ENCODE measurements at regions of chr12 and their contacts with region 1.

Region 1: DNA sequence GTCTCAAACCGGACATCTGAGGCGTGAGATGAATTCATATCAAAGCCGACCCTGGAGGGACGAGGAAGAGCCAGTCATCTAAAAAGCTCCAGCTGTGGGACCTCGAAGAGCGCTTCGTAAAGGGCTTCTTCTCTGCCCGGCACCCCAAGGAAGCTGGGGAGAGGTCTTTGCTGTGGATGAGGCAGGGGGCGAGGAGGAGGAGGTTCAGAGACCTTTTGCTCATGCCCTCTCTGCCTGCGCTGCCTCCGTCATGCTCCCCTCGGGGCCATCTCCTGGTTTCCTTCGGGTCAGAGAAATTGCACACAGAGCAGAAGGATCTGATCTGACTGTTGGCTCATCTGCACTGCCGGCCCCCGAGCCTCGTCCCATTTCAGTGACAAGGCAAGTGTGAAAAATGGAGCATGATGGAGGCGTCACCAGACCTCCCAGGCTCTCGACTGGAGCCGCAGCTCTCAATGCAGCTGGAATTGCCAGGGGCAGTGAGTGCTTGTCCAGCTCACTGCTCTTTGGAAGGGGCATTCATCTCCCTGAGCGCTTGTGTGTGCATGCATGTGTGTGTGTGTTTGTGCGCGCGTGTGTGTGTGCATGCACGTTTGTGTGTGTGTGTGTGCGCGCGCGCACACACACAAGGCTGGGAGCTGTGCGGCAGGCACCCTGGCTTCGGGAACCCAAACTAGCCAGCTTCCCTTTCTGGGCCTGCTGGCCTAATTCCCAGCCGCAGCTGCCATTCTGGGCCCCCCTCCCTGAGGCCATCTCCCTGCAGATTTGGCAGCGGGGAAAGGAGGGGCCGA is 9.2 kb downstream of the CABP1 start:
- DNase-seq: no peak
- H3K4me3 ChIP-seq: peak overlapping the region; percentile 48 to 65
- H3K27ac ChIP-seq: peak overlapping the region; percentile 52 to 64
- H3K4me1 ChIP-seq: peaks cover 12 to 33% of the 10 kb centered on the region in 2 donors
- H3K27me3 ChIP-seq: no peaks in the 10 kb centered on the region
- CTCF ChIP-seq: no peak

Region 2: GRCh38 chr12:120686690-120687577 is 37.3 kb after region 1 on chr12 and contains the start of gene MLEC:
- intact Hi-C with region 1: loop called (anchors 1 kb)
- DNase-seq: peak; percentile 92 to 99
- H3K4me3 ChIP-seq: peak within 1 kb of the TSS; percentile 75 to 99
- H3K27ac ChIP-seq: peak within 1 kb of the TSS; percentile 87 to 89
- H3K4me1 ChIP-seq: peaks cover 7 to 28% of the 10 kb centered on the region in 2 donors
- H3K27me3 ChIP-seq: no peaks in the 10 kb centered on the region
- CTCF ChIP-seq: peak in 2 of 3 experiments; percentile 1 to 21
- total RNA-seq, gene MLEC: 47.5 TPM

Region 3: DNA sequence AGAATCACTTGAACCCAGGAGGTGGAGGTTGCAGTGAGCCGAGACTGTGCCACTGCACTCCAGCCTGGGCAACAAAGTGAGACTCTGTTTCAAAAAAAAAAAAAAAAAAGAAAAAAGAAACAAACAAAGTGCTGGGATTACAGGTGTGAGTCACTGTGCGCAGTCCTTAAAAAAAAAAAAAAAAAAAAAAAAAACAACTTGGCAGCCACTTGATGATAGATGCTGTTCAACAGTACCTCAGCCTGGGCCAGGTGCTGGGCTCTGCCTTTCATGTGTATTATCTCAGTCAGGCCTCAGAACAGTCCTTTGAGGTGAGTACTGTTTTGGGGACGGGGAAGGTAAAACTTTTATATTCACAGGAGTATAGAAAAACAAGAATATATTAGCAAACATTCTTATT is 85.5 kb after region 1 on chr12:
- intact Hi-C with region 1: no loop called
- DNase-seq: no peak
- H3K4me3 ChIP-seq: no peak overlapping the region
- H3K27ac ChIP-seq: no peak overlapping the region
- H3K4me1 ChIP-seq: no peaks in the 10 kb centered on the region
- H3K27me3 ChIP-seq: no peaks in the 10 kb centered on the region
- CTCF ChIP-seq: no peak

Region 4: GRCh38 chr12:120774169-120774916 is 124.7 kb after region 1 on chr12:
- intact Hi-C with region 1: no loop called
- DNase-seq: no peak
- H3K4me3 ChIP-seq: no peak overlapping the region
- H3K27ac ChIP-seq: no peak overlapping the region
- H3K4me1 ChIP-seq: no peaks in the 10 kb centered on the region
- H3K27me3 ChIP-seq: no peaks in the 10 kb centered on the region
- CTCF ChIP-seq: no peak

Region 5: DNA sequence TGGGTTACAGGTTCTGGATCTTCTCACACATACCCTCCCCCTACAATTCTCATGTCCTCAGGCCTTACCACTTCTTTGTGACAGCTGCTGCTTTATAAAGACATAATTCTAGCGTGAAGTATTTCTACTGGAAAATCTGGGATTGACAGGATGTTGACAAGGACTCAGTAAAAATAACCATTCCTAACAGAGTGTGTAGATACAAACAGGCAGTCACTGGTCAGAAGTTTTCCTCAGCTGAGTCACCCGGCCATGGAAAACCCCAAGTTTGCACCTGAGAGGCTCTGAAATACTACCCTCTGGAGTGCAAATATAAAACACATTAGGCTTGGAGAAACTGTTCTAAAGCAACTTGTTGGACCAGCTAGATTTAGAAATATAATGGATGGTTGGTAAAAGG is 200.1 kb after region 1 on chr12:
- intact Hi-C with region 1: loop called (anchors 5 kb)
- DNase-seq: no peak
- H3K4me3 ChIP-seq: no peak overlapping the region
- H3K27ac ChIP-seq: peak overlapping the region; percentile 63 to 71
- H3K4me1 ChIP-seq: peaks cover 12 to 60% of the 10 kb centered on the region in 2 donors
- H3K27me3 ChIP-seq: no peaks in the 10 kb centered on the region
- CTCF ChIP-seq: peak in 1 of 3 experiments; percentile 12

Region 6: GRCh38 chr12:120971299-120972179 is 321.9 kb after region 1 on chr12:
- intact Hi-C with region 1: loop called (anchors 1 kb)
- DNase-seq: no peak
- H3K4me3 ChIP-seq: no peak overlapping the region
- H3K27ac ChIP-seq: no peak overlapping the region
- H3K4me1 ChIP-seq: no peaks in the 10 kb centered on the region
- H3K27me3 ChIP-seq: no peaks in the 10 kb centered on the region
- CTCF ChIP-seq: peak; percentile 69 to 81 (median 71)